ENCODE measurements at regions of chr1 and their contacts with region 1.

Region 1: DNA sequence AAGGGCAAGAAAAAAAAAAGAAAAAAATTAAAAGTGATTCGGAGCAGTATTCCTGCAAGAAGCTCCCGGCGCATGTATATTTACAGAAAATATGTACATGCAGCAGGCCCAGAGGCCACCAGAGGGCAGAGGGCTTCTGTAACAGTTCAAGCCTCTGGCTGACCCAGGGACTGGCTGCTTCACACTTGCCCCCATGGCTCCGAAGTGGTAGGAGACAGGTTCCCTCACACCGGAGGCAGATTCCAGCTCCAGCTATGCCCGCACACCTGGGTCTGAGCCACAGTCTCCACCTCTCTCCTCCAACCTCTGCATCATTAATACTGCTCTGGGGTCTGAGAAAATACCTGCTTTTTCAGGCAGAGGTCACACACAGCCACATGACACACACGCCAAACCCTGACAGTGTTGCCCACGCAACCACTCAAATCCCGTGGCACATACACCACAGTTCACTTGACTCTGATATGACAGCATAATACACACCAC is 2.2 kb upstream of the ARHGAP30 start:
- DNase-seq: peak; percentile 51 to 73
- ATAC-seq: peak in 2 of 3 donors; percentile 10 to 18
- H3K4me3 ChIP-seq: no peak overlapping the region
- H3K4me3 Mint-ChIP-seq: peak overlapping the region; percentile 40
- H3K27ac ChIP-seq: peak overlapping the region; percentile 40
- H3K27ac Mint-ChIP-seq: peak overlapping the region; percentile 89
- H3K4me1 ChIP-seq: peaks cover 41% of the 10 kb centered on the region
- H3K4me1 Mint-ChIP-seq: peaks cover 45 to 69% of the 10 kb centered on the region in 2 donors
- H3K27me3 ChIP-seq: no peaks in the 10 kb centered on the region
- H3K27me3 Mint-ChIP-seq: no peaks in the 10 kb centered on the region
- CTCF ChIP-seq: peak; percentile 76

Region 2: GRCh38 chr1:159829273-159829634 is 1242.7 kb before region 1 on chr1:
- intact Hi-C with region 1: loop called (anchors 10 kb)
- DNase-seq: peak in 1 of 2 donors; percentile 10
- ATAC-seq: peak in 1 of 3 donors; percentile 25
- H3K4me3 ChIP-seq: no peak overlapping the region
- H3K4me3 Mint-ChIP-seq: peak overlapping the region; percentile 60
- H3K27ac ChIP-seq: no peak overlapping the region
- H3K27ac Mint-ChIP-seq: peak overlapping the region; percentile 45 to 72
- H3K4me1 ChIP-seq: peaks cover 62% of the 10 kb centered on the region
- H3K4me1 Mint-ChIP-seq: peaks cover 62 to 65% of the 10 kb centered on the region in 2 donors
- H3K27me3 ChIP-seq: no peaks in the 10 kb centered on the region
- H3K27me3 Mint-ChIP-seq: peaks cover 20 to 22% of the 10 kb centered on the region in 2 donors
- CTCF ChIP-seq: no peak

Region 3: GRCh38 chr1:161021165-161021960 is 50.6 kb before region 1 on chr1:
- intact Hi-C with region 1: loop called (anchors 1 kb)
- DNase-seq: peak; percentile 71 to 93
- ATAC-seq: peak; percentile 88 to 94 (median 93)
- H3K4me3 ChIP-seq: peak overlapping the region; percentile 87
- H3K4me3 Mint-ChIP-seq: peak overlapping the region; percentile 95
- H3K27ac ChIP-seq: peak overlapping the region; percentile 74
- H3K27ac Mint-ChIP-seq: peak overlapping the region; percentile 89 to 90
- H3K4me1 ChIP-seq: peaks cover 23% of the 10 kb centered on the region
- H3K4me1 Mint-ChIP-seq: peaks cover 28 to 38% of the 10 kb centered on the region in 2 donors
- H3K27me3 ChIP-seq: no peaks in the 10 kb centered on the region
- H3K27me3 Mint-ChIP-seq: no peaks in the 10 kb centered on the region
- CTCF ChIP-seq: no peak

Region 4: GRCh38 chr1:161045750-161046571 is 26.0 kb before region 1 on chr1 and contains the start of gene USF1:
- intact Hi-C with region 1: loop called (anchors 1 kb)
- DNase-seq: peak; percentile 93 to 98
- ATAC-seq: peak; percentile 79 to 92 (median 87)
- H3K4me3 ChIP-seq: peak within 1 kb of the TSS; percentile 90
- H3K4me3 Mint-ChIP-seq: peak within 1 kb of the TSS; percentile 97
- H3K27ac ChIP-seq: peak within 1 kb of the TSS; percentile 88
- H3K27ac Mint-ChIP-seq: peak within 1 kb of the TSS; percentile 98 to 99
- H3K4me1 ChIP-seq: peaks cover 35% of the 10 kb centered on the region
- H3K4me1 Mint-ChIP-seq: peaks cover 37 to 72% of the 10 kb centered on the region in 2 donors
- H3K27me3 ChIP-seq: no peaks in the 10 kb centered on the region
- H3K27me3 Mint-ChIP-seq: no peaks in the 10 kb centered on the region
- CTCF ChIP-seq: no peak
- total RNA-seq, gene USF1: 113 to 121 (median 114) TPM

Region 5: GRCh38 chr1:161244888-161245287 is 173.0 kb after region 1 on chr1:
- intact Hi-C with region 1: no loop called
- DNase-seq: no peak
- ATAC-seq: no peak
- H3K4me3 ChIP-seq: no peak overlapping the region
- H3K4me3 Mint-ChIP-seq: no peak overlapping the region
- H3K27ac ChIP-seq: no peak overlapping the region
- H3K27ac Mint-ChIP-seq: no peak overlapping the region
- H3K4me1 ChIP-seq: no peaks in the 10 kb centered on the region
- H3K4me1 Mint-ChIP-seq: no peaks in the 10 kb centered on the region
- H3K27me3 ChIP-seq: no peaks in the 10 kb centered on the region
- H3K27me3 Mint-ChIP-seq: peaks cover 2 to 9% of the 10 kb centered on the region in 2 donors
- CTCF ChIP-seq: no peak